Keratinocyte (primary cell): ENCODE measurements at regions of chr17 and their contacts with region 1.

Region 1: GRCh38 chr17:49290690-49291359 is 60.2 kb upstream of the PHOSPHO1 start:
- DNase-seq: no peak
- H3K4me3 ChIP-seq: no peak overlapping the region
- H3K27ac ChIP-seq: no peak overlapping the region
- H3K4me1 ChIP-seq: no peaks in the 10 kb centered on the region
- H3K27me3 ChIP-seq: no peaks in the 10 kb centered on the region
- CTCF ChIP-seq: peak in 2 of 3 experiments; percentile 59 to 62

Region 2: GRCh38 chr17:49230636-49231562 is 59.9 kb before region 1 on chr17 and contains the start of gene PHOSPHO1:
- dilution Hi-C with region 1: loop called (anchors 10 kb)
- DNase-seq: peak; percentile 13
- H3K4me3 ChIP-seq: peak within 1 kb of the TSS; percentile 58 to 73 (median 71)
- H3K27ac ChIP-seq: no peak within 1 kb of the TSS
- H3K4me1 ChIP-seq: peaks cover 3% of the 10 kb centered on the region
- H3K27me3 ChIP-seq: peaks cover 44% of the 10 kb centered on the region
- CTCF ChIP-seq: no peak
- polyA plus RNA-seq, gene PHOSPHO1: 0.04 to 0.13 TPM (median 0.07 TPM) in 3 replicates